ENCODE measurements at regions of chr1 and their contacts with region 1.

Region 1: GRCh38 chr1:227742738-227743715 is 7.8 kb downstream of the SNAP47 start:
- DNase-seq: no peak
- H3K4me3 ChIP-seq: no peak overlapping the region
- H3K27ac ChIP-seq: no peak overlapping the region
- H3K4me1 ChIP-seq: peaks cover 0 to 19% (median 8%) of the 10 kb centered on the region in 3 donors
- H3K27me3 ChIP-seq: no peaks in the 10 kb centered on the region
- CTCF ChIP-seq: no peak
- POLR2A ChIP-seq: no peak

Region 2: DNA sequence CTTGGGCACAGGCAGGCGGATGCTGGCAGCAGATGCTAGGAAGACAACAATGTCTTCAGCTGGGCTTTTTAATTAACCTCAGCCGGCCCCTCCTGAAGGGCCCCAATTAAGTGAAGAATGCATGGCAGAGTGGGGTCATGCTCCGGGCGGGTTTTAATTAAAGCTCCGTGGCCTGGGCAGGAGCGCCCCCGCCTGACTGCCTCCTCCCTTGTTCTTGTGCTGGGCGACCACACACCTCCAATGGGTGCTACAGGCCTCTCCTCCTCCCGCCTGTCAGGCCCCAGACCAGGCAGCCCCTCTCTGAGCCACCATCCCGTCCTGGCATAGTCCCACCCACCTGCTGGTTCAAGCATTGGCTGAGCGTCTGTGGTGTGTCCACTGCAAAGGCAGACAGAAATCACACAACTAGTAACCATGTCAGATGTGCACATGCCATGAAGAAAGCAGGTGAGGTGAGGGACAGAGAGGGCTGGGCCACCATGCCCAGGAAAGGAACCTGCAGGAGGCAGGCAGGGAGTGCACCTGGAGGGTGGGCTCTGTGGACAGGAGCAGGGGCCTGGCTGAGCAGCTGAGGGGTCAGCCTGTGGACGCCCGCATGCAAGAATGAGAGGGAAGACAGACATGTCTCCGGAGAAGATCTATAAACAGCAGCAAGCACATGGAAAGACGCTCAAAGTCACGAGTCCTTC is 331.0 kb after region 1 on chr1:
- intact Hi-C with region 1: loop called (anchors 5 kb)
- DNase-seq: no peak
- H3K4me3 ChIP-seq: no peak overlapping the region
- H3K27ac ChIP-seq: no peak overlapping the region
- H3K4me1 ChIP-seq: no peaks in the 10 kb centered on the region
- H3K27me3 ChIP-seq: peaks cover 0 to 37% (median 0%) of the 10 kb centered on the region in 4 donors
- CTCF ChIP-seq: peak in 3 of 6 experiments; percentile 6 to 44 (median 18)
- POLR2A ChIP-seq: no peak

Measured in esophagus squamous epithelium (tissue), 5 donors.